ENCODE measurements at regions of chr2 and their contacts with region 1.

Region 1: GRCh38 chr2:150023044-150023443 is 435.5 kb upstream of the MMADHC start:
- DNase-seq: peak; percentile 23

Region 2: GRCh38 chr2:150109912-150110311 is 86.9 kb after region 1 on chr2:
- in situ Hi-C with region 1: loop called (anchors 5 kb)
- DNase-seq: no peak